Endothelial cell of umbilical vein (primary cell): ENCODE measurements at regions of chr12 and their contacts with region 1.

Region 1: DNA sequence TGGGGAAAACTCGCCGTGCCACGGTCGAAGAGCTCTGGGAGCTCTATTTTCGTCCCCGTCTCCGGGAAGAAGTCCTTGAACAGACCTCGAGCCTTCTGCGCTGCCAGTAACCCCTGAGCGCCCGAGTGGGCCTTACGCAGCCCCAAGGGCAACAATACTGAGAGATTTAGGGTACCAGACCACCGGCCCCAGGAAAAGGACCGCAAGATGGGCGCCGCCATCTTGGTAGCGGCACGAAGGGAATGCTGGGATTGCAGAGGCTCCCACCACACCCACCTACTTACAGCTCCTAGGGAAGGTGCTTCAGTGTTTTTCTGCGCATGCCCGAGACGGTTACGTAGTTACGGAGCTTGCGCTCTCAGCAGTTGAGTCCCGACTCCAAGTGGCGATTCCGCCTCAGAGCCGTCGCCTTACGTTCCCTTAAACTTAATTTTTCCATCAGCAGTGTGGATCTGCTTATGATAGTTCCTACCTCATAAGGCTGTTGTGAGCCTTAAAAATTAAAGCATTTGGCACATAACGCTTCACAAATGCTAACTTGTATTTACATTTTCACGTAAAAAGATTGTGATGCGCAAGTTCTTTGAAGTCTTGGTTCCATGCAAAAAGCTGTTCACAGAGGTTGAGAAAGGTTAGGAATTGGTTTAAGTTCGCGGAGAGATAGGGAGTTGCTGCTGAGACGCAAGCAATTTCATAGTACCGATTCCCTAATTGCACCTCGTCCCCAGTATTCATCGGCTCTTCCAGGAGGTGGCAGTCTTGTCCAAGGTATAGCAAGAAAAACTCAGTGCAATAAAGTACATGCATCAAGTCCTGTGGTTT is at the start of gene YARS2:
- DNase-seq: peak; percentile 95
- H3K4me3 ChIP-seq: peak within 1 kb of the TSS; percentile 60 to 90 (median 76)
- H3K27ac ChIP-seq: peak within 1 kb of the TSS; percentile 91
- H3K4me1 ChIP-seq: peaks cover 13% of the 10 kb centered on the region
- H3K27me3 ChIP-seq: no peaks in the 10 kb centered on the region
- CTCF ChIP-seq: peak; percentile 68 to 88
- POLR2A ChIP-seq: peak; percentile 97
- total RNA-seq, gene YARS2: 26.8 and 28.4 TPM in 2 replicates

Region 2: DNA sequence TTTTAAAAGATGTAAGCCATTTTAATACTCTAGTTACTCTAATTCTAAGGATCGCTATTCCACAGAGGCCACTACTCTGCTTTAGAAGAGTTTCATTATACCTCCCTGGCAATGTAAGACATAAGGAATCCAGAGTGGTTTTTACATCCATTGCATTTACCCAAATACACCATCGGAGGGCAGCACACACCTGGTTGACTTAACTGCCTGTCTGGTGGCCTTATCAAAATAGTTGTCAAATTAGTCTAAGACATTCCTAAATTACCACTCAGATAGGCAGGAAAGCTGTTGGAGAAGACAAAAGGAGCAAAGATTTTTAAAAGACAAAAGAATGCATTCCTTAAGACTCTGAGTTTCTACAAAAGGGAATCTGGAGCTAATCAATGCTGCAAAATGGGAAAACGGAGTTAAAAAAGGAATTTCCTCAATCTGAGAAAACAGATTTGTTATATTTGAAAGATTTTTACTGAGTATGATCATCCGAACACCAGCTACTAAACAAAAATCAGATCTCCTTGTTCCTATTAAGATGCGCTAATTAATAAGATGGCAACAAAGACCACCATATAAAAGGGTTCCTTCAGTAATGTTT is 390.3 kb before region 1 on chr12:
- CTCF ChIA-PET with region 1: interaction called, 10 read pairs
- POLR2A ChIA-PET with region 1: no interaction called
- dilution Hi-C with region 1: no loop called
- intact Hi-C with region 1: loop called (anchors 1 kb)
- DNase-seq: peak; percentile 85
- H3K4me3 ChIP-seq: no peak overlapping the region
- H3K27ac ChIP-seq: no peak overlapping the region
- H3K4me1 ChIP-seq: peaks cover 2% of the 10 kb centered on the region
- H3K27me3 ChIP-seq: no peaks in the 10 kb centered on the region
- CTCF ChIP-seq: peak; percentile 66 to 70
- POLR2A ChIP-seq: no peak

Region 3: GRCh38 chr12:32548691-32549281 is 207.1 kb before region 1 on chr12:
- CTCF ChIA-PET with region 1: no interaction called
- POLR2A ChIA-PET with region 1: no interaction called
- dilution Hi-C with region 1: no loop called
- intact Hi-C with region 1: no loop called
- DNase-seq: peak; percentile 45
- H3K4me3 ChIP-seq: no peak overlapping the region
- H3K27ac ChIP-seq: no peak overlapping the region
- H3K4me1 ChIP-seq: peaks cover 26% of the 10 kb centered on the region
- H3K27me3 ChIP-seq: no peaks in the 10 kb centered on the region
- CTCF ChIP-seq: no peak
- POLR2A ChIP-seq: no peak

Region 4: GRCh38 chr12:32765906-32766305 is 10.0 kb after region 1 on chr12:
- CTCF ChIA-PET with region 1: interaction called, 13 read pairs
- POLR2A ChIA-PET with region 1: no interaction called
- dilution Hi-C with region 1: no loop called
- intact Hi-C with region 1: no loop called
- DNase-seq: no peak
- H3K4me3 ChIP-seq: no peak overlapping the region
- H3K27ac ChIP-seq: no peak overlapping the region
- H3K4me1 ChIP-seq: no peaks in the 10 kb centered on the region
- H3K27me3 ChIP-seq: peaks cover 2 to 6% of the 10 kb centered on the region in 2 experiments
- CTCF ChIP-seq: no peak
- POLR2A ChIP-seq: no peak

Region 5: GRCh38 chr12:32836710-32837109 is 80.8 kb after region 1 on chr12:
- CTCF ChIA-PET with region 1: no interaction called
- POLR2A ChIA-PET with region 1: no interaction called
- dilution Hi-C with region 1: no loop called
- intact Hi-C with region 1: no loop called
- DNase-seq: no peak
- H3K4me3 ChIP-seq: no peak overlapping the region
- H3K27ac ChIP-seq: no peak overlapping the region
- H3K4me1 ChIP-seq: no peaks in the 10 kb centered on the region
- H3K27me3 ChIP-seq: no peaks in the 10 kb centered on the region
- CTCF ChIP-seq: no peak
- POLR2A ChIP-seq: no peak

Region 6: GRCh38 chr12:32918890-32919801 is 163.3 kb after region 1 on chr12:
- CTCF ChIA-PET with region 1: interaction called, 87 read pairs
- POLR2A ChIA-PET with region 1: interaction called, 3 read pairs
- dilution Hi-C with region 1: no loop called
- intact Hi-C with region 1: loop called (anchors 1 kb)
- DNase-seq: peak; percentile 54
- H3K4me3 ChIP-seq: no peak overlapping the region
- H3K27ac ChIP-seq: peak overlapping the region; percentile 63
- H3K4me1 ChIP-seq: peaks cover 23% of the 10 kb centered on the region
- H3K27me3 ChIP-seq: no peaks in the 10 kb centered on the region
- CTCF ChIP-seq: peak; percentile 37 to 39
- POLR2A ChIP-seq: no peak

Region 7: DNA sequence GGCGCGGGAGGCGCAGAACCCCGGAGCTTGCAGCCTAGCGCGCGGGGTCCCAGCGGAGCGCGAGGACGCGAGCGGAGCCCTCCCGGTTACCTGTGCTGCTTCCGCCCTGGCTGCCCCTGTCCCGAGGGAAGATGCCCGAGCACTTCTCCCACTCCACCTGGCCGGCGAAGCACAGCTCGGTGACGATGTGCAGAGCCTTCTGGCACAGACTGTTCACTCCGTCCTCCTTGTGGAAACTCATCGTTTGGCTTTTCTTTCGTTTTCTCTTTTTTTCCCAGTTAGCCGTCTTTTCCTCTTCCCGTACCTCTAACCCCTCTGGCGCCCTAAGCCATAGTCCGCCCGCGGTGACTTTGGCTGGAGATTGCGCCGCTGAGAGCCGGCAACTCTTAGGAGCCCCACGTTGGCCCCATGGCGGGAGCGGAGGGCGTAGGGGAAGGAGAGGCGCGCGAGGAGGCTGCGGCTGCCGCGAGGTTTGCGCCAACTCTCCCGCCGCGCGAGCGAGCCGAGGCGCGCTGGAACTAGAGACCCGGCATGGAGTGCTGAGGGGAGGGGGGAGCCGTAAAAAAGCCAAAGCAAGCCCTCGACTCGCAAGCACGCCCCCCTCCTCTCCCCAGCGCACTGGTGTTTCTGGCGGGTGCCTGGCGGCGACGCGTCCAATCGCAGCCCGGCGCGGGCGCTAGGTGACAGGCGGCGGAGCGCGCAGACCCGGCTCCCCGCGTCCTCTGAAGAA is 683.6 kb after region 1 on chr12 and contains the start of gene SYT10:
- CTCF ChIA-PET with region 1: no interaction called
- POLR2A ChIA-PET with region 1: no interaction called
- dilution Hi-C with region 1: no loop called
- intact Hi-C with region 1: loop called (anchors 5 kb)
- DNase-seq: peak; percentile 12
- H3K4me3 ChIP-seq: peak within 1 kb of the TSS; percentile 38 to 67 (median 47)
- H3K27ac ChIP-seq: no peak within 1 kb of the TSS
- H3K4me1 ChIP-seq: no peaks in the 10 kb centered on the region
- H3K27me3 ChIP-seq: peaks cover 12 to 26% of the 10 kb centered on the region in 2 experiments
- CTCF ChIP-seq: no peak
- POLR2A ChIP-seq: no peak
- total RNA-seq, gene SYT10: not detected in 2 replicates